Posterior vena cava (tissue), 2 donors: ENCODE measurements at regions of chr15 and their contacts with region 1.

Region 1: DNA sequence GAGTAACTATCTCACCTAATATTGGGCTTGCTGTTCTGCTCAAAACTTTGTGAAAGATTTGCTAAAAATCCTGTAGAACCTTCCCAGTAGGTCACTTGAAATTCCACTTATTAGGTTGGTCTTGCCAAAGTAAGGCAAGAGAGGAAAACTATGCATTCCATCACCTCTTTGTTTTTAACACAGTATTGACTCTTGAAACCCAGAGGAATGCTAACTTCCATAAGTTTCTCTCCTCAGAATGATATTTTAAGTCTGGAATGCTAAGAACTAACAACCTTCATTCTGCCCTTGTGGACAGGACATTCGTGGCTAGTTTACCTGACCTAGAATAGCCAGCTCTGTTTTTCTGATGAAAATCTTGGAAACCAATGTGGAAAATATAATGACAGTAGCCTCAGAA is 154.5 kb downstream of the TMCO5A start:
- DNase-seq: no peak

Region 2: GRCh38 chr15:38041576-38041975 is 47.4 kb before region 1 on chr15:
- intact Hi-C with region 1: loop called in 1 of 2 experiments (anchors 1 kb)
- DNase-seq: no peak